Activated CD4-positive, alpha-beta T cell treated with anti-CD3 and anti-CD28 coated beads, Interleukin-2, amount 10 ng/mL, durations not matched to agents 7 days and 5 days (primary cell): ENCODE measurements at regions of chr16 and their contacts with region 1.

Region 1: GRCh38 chr16:71564155-71564967 is 12.5 kb downstream of the TAT start:
- DNase-seq: no peak
- H3K4me3 Mint-ChIP-seq: peak overlapping the region; percentile 87
- H3K27ac Mint-ChIP-seq: peak overlapping the region; percentile 97
- H3K4me1 Mint-ChIP-seq: peaks cover 19% of the 10 kb centered on the region
- H3K27me3 Mint-ChIP-seq: peaks cover 2% of the 10 kb centered on the region

Region 2: GRCh38 chr16:70679666-70680494 is 884.5 kb before region 1 on chr16:
- CTCF ChIA-PET with region 1: interaction called, 10 read pairs
- POLR2A ChIA-PET with region 1: no interaction called
- DNase-seq: no peak
- H3K4me3 Mint-ChIP-seq: no peak overlapping the region
- H3K27ac Mint-ChIP-seq: no peak overlapping the region
- H3K4me1 Mint-ChIP-seq: peaks cover 12% of the 10 kb centered on the region
- H3K27me3 Mint-ChIP-seq: peaks cover 4% of the 10 kb centered on the region

Region 3: DNA sequence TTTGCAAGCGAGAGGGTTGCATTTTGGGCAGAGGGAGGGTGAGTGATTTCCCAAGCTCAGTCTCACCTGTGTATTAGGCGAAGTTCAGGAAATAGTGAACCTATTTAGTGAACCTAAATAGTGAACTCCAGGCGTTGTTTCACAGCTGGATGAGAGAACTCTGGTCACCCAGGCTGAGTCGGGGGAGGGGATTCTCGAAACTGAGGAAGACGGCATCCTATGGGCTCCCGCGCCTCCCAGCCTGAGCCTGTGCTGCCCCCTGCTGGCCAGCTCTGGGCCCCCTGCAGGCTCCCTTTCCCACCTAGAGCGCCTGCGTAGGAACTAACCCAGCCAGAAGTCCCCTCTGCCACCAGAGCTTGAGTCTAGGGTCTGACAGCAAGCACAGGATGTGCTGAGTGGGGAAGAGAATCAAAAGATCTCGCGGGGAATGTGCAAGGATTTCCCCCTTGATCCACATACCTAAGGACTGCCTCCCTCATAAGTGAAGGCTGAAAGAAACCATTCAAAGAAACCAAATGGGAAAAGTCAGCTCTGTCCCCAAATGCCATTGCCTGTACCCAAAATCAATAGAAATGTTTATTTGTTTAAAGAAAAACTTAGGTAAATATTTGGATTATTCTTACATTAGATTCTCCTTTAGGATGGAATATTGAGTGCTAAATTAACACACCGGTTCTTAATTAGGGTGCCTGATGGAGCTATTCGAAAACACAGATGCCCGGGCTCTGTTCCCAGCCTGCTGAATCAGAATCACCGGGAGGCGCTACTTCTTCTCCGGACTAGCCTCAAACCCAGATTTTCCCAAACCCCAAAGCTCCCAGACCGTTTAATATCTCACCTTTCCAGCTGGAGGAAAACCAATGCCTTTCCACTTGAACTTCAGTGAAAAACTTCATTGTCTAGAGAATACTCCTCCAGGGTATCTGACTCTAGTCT is 46.8 kb after region 1 on chr16:
- CTCF ChIA-PET with region 1: interaction called, 12 read pairs
- POLR2A ChIA-PET with region 1: no interaction called
- DNase-seq: peak; percentile 75
- H3K4me3 Mint-ChIP-seq: no peak overlapping the region
- H3K27ac Mint-ChIP-seq: no peak overlapping the region
- H3K4me1 Mint-ChIP-seq: peaks cover 2% of the 10 kb centered on the region
- H3K27me3 Mint-ChIP-seq: peaks cover 29% of the 10 kb centered on the region